HepG2 (cell line): ENCODE measurements at regions of chr3 and their contacts with region 1.

Region 1: DNA sequence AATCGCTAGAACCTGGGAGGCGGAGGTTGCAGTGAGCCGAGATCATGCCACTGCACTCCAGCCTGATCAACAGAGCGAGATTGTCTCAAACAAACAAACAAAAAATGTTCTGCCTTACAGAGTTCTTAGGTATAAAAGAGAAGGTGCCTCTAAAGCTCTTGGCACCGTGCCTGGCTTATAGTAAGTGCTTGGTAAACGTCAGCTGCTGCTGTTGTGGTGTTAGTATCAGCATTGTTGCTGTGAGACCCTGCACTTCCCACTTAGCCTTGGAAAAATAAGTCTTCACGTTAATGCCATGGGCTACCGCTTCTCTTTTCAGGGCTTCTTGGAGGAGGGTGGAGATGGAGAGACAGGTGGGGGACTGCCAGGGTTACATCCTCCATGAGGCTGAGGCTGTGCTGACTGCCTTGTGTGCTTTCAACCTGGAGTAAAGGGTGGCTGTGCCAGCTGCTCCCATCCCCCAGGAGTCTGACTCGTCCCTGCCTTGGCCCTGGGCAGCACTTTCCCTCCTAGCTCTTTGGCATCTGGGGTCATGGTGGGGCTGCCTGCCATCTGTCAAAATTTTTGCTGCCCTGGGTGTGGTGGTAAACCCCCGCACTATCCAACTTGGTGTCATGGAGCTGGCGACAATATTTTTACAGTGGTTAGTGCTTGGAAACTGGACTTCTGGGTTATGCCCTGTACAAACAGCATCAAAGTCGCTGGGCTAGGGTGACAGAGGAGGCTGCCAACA is 17.8 kb downstream of the FLNB start:
- DNase-seq: peak; percentile 39
- ATAC-seq: no peak; the same call in 2 of the 3 replicates
- H3K4me3 ChIP-seq: no peak overlapping the region
- H3K27ac ChIP-seq: peak overlapping the region; percentile 24
- H3K4me1 ChIP-seq: peaks cover 90% of the 10 kb centered on the region
- H3K27me3 ChIP-seq: no peaks in the 10 kb centered on the region
- CTCF ChIP-seq: no peak
- EP300 ChIP-seq: no peak
- POLR2A ChIP-seq: no peak
- RAD21 ChIP-seq: no peak

Region 2: GRCh38 chr3:58041654-58042324 is 15.8 kb after region 1 on chr3:
- CTCF ChIA-PET with region 1: no interaction called
- POLR2A ChIA-PET with region 1: interaction called, 10 read pairs
- in situ Hi-C with region 1: no loop called
- intact Hi-C with region 1: no loop called
- DNase-seq: peak; percentile 85
- ATAC-seq: peak; percentile 64
- H3K4me3 ChIP-seq: peak overlapping the region in 1 of 3 experiments; percentile 36; a peak in 2 of 6 replicates
- H3K27ac ChIP-seq: peak overlapping the region; percentile 88
- H3K4me1 ChIP-seq: peaks cover 86% of the 10 kb centered on the region
- H3K27me3 ChIP-seq: no peaks in the 10 kb centered on the region
- CTCF ChIP-seq: no peak
- EP300 ChIP-seq: peak in 1 of 2 experiments; percentile 71; a peak in 2 of 4 replicates
- POLR2A ChIP-seq: no peak
- RAD21 ChIP-seq: no peak

Region 3: GRCh38 chr3:58066842-58067241 is 40.8 kb after region 1 on chr3:
- CTCF ChIA-PET with region 1: no interaction called
- POLR2A ChIA-PET with region 1: no interaction called
- in situ Hi-C with region 1: no loop called
- intact Hi-C with region 1: loop called (anchors 2 kb)
- DNase-seq: peak; percentile 27
- ATAC-seq: no peak
- H3K4me3 ChIP-seq: no peak overlapping the region
- H3K27ac ChIP-seq: peak overlapping the region; percentile 77
- H3K4me1 ChIP-seq: peaks cover 96% of the 10 kb centered on the region
- H3K27me3 ChIP-seq: no peaks in the 10 kb centered on the region
- CTCF ChIP-seq: no peak
- EP300 ChIP-seq: no peak
- POLR2A ChIP-seq: no peak
- RAD21 ChIP-seq: no peak